ENCODE measurements at regions of chr10 and their contacts with region 1.

Region 1: DNA sequence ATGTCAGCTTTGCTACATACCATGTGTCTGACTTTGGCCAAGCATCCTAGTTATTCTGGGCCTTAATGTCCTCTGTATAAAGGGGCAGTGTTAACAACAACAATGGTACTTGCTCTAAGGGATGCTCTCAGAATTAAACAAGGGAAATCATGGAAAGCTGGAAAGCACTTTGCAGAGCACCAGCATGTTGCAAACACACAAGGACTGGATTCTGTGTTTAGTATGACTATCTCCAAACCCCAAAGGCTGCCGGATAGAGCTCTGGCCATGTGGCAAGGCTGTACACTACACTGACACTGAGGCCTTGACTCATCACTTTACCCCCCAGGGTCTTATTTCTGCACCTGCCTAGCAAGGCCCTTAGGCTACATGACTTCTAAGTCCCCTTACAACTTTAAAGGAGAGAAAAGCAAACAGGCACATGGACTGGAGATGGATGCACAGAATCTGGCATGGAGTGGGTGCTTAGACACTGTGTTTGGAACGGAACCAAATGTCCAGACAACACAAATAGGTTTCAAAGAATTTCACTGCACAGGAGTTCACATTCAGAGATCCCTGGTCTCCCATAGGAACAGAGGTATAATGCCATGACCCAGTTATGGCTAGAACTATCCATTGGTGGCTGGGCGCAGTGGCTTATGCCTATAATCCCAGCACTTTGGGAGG is 74.6 kb downstream of the FAM13C start:
- DNase-seq: no peak
- H3K4me3 Mint-ChIP-seq: no peak overlapping the region
- H3K27ac Mint-ChIP-seq: no peak overlapping the region
- H3K4me1 Mint-ChIP-seq: no peaks in the 10 kb centered on the region
- H3K27me3 Mint-ChIP-seq: peaks cover 69% of the 10 kb centered on the region
- CTCF ChIP-seq: no peak

Region 2: DNA sequence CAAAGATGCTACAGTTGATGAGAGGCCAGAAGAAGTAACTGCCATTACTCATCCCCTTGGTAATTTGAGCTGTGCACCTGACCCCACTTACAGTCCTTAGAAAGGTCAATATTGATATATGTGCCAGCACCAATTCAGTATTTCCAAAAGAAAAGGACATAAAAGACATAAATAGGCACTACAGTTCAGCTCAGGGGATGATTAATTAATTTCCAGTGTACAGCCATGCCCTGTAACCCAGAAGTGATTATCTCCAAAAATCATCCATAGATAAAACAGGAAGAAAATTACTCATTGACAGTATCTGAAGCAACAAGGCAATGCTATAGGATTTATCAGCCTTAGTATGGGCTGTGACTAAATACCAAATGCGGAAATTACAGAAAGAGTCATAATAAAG is 28.8 kb before region 1 on chr10:
- CTCF ChIA-PET with region 1: no interaction called
- intact Hi-C with region 1: no loop called
- DNase-seq: no peak
- H3K4me3 Mint-ChIP-seq: no peak overlapping the region
- H3K27ac Mint-ChIP-seq: no peak overlapping the region
- H3K4me1 Mint-ChIP-seq: no peaks in the 10 kb centered on the region
- H3K27me3 Mint-ChIP-seq: peaks cover 36% of the 10 kb centered on the region
- CTCF ChIP-seq: no peak

Region 3: DNA sequence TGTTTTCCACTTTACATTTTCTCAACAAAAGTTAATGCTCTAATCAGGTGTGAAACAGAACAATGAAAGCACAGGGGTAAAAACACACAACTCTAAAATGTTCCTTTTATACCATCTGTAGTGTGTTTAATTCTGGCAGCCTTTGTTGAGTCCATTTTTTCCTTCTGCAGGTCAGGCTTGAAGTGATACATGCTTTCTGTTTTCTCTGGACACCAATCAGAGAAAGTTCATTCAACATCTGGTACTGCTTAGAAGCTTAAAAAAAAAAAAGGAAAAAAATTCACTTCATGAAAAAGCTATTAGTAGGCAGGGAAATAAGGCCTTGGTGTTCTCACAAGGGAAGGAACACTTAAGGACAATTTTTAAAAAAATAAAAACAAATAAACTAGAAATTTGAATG is 1887.6 kb after region 1 on chr10:
- CTCF ChIA-PET with region 1: interaction called, 10 read pairs
- intact Hi-C with region 1: no loop called
- DNase-seq: no peak
- H3K4me3 Mint-ChIP-seq: no peak overlapping the region
- H3K27ac Mint-ChIP-seq: no peak overlapping the region
- H3K4me1 Mint-ChIP-seq: no peaks in the 10 kb centered on the region
- H3K27me3 Mint-ChIP-seq: no peaks in the 10 kb centered on the region
- CTCF ChIP-seq: no peak